ENCODE measurements at regions of chr12 and their contacts with region 1.

Region 1: DNA sequence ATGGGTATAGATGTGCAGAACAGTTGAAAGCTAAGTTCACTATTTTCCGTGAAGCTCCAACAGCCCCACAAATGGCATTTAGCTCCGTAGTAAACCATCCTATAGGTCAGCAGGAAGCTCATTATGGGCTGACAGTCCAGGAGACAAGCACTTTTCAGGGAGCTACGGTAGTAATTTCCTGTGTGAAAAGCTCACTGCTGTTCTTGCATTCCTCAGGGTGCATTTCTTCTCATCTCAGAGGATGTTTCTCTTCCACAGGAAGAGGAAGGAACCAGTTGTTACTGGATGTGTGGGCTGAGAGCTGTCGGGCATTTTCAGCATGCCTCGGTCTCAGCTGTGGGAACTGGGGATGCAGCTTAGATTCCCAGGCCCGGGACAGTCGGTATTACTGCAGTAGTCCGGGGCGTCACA is 72.8 kb downstream of the GALNT4 start:
- DNase-seq: peak; percentile 26
- H3K4me3 Mint-ChIP-seq: peak overlapping the region; percentile 24
- H3K27ac Mint-ChIP-seq: peak overlapping the region; percentile 50
- H3K4me1 Mint-ChIP-seq: peaks cover 50% of the 10 kb centered on the region
- H3K27me3 Mint-ChIP-seq: no peaks in the 10 kb centered on the region
- CTCF ChIP-seq: no peak

Region 2: DNA sequence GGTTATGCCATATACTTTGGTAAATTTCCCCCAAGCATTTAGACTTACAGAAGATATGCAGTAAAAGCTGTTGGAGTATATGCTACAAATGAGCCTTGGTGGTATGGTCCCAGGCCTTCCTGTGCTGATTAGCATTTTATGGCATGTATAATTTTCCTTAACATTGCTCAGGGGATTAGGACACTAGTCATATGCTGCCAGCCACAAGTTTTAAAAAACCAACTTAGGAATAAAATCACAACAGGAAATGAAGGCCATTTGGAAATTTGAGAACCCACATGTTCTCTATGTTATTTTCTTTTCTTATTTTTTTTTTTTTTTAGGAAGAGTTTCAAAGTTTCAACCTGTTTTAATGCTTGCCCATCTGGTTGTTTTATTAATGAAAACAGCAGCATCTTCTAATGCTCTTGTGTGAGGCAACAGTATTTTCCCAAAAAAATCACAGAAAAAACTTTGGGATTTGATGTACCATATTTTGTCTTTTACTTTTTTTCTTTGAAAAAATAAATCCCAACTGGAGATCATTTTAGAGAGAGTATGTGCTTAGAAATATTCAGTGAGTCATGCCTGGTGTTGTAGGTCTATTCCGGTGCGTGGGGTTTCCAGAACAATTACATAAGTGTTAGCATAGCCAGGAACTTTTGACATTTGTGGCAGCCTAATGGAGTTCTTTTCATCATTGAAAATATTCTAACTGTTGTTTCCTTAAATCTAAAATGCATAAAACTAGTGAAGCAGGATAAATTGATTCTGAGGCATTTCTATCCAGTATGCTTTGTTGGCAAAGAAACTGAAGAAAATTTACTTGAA is 77.9 kb before region 1 on chr12:
- CTCF ChIA-PET with region 1: no interaction called
- intact Hi-C with region 1: loop called (anchors 5 kb)
- DNase-seq: peak; percentile 53
- H3K4me3 Mint-ChIP-seq: no peak overlapping the region
- H3K27ac Mint-ChIP-seq: peak overlapping the region; percentile 99
- H3K4me1 Mint-ChIP-seq: peaks cover 77% of the 10 kb centered on the region
- H3K27me3 Mint-ChIP-seq: no peaks in the 10 kb centered on the region
- CTCF ChIP-seq: no peak

Region 3: DNA sequence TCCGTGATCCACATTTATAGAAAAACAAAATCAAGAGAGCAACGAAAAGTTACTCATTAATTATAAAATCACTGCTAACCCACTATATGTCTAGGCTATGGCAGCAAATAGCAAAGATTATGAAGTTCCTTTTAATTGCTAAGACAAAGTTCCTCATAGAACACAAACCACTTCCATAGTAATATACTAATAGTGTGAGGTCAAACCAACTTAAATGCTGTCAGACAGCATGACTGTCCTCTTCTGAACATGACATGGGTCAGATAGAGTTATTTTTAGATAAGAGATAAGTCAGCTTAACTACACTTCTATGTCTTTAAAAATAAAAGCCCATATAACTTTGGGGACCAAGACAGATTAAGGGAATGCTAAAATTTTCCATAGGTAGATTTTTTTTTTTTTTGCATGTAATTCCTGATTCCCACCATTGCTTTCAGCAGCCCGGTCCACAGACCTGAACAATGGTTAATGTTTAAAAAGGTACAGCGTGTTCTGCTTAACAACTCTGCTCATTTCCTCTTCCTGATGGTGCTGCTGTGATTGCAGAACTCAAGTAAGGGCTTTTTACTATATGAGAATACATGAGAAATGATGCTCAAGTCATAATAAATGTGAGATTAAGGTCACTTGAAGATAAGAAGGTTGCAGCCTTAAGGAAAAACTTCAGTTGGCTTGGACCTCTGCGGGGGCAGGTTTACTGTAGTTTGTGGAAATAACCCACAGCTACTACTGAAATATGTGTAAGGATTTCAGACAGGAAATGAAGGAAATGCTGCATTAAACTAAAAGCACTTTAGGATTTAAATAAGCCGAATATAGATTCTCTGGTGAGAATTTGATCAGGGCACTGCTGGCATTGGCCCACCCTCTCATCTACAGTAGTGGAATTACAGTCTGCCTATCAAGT is 61.8 kb before region 1 on chr12:
- CTCF ChIA-PET with region 1: no interaction called
- intact Hi-C with region 1: loop called (anchors 5 kb)
- DNase-seq: no peak
- H3K4me3 Mint-ChIP-seq: no peak overlapping the region
- H3K27ac Mint-ChIP-seq: peak overlapping the region; percentile 77
- H3K4me1 Mint-ChIP-seq: peaks cover 63% of the 10 kb centered on the region
- H3K27me3 Mint-ChIP-seq: no peaks in the 10 kb centered on the region
- CTCF ChIP-seq: no peak

Region 4: DNA sequence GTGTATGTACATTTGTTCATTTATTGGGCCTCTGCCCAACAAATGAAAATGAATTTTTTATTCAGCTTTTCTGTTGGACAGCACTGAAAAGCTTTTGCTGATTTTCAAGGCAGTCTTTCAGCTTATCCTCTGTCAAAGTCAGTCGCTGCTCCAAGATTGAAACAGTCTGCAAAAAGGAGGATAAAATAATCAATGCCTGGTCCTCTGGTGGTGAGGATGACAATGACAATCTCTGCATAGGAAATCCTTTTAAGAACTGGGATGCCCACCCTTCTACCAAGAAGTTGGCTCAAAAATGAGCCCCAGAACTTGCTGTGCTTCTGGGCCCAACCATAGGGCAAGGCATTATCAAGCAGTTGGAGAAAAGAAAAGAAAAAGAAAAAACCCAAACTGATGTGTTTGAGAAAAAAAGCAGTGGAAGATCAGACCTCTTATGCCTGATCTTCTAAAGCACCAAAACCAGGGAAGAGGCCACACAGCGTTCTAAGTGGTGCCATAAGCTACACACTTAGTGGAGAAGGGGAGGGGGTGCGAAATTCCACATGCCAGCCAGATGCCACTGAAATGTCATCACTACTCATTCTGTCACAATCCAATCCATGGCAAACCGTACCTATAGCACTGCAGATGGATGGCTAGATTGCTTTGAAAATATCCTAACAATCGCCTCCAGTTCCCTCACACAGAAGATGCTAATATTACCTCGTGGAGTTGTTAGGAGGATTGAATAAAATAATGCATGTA is 30.6 kb before region 1 on chr12:
- CTCF ChIA-PET with region 1: no interaction called
- intact Hi-C with region 1: loop called (anchors 2 kb)
- DNase-seq: no peak
- H3K4me3 Mint-ChIP-seq: no peak overlapping the region
- H3K27ac Mint-ChIP-seq: no peak overlapping the region
- H3K4me1 Mint-ChIP-seq: peaks cover 16% of the 10 kb centered on the region
- H3K27me3 Mint-ChIP-seq: no peaks in the 10 kb centered on the region
- CTCF ChIP-seq: no peak